Left ventricle myocardium superior (tissue), 1 donor: ENCODE measurements at regions of chr15 and their contacts with region 1.

Region 1: GRCh38 chr15:75201609-75202250 is at the start of gene C15orf39:
- DNase-seq: peak; percentile 90
- ATAC-seq: peak; percentile 81
- total RNA-seq, gene C15orf39: 14.8 TPM

Region 2: DNA sequence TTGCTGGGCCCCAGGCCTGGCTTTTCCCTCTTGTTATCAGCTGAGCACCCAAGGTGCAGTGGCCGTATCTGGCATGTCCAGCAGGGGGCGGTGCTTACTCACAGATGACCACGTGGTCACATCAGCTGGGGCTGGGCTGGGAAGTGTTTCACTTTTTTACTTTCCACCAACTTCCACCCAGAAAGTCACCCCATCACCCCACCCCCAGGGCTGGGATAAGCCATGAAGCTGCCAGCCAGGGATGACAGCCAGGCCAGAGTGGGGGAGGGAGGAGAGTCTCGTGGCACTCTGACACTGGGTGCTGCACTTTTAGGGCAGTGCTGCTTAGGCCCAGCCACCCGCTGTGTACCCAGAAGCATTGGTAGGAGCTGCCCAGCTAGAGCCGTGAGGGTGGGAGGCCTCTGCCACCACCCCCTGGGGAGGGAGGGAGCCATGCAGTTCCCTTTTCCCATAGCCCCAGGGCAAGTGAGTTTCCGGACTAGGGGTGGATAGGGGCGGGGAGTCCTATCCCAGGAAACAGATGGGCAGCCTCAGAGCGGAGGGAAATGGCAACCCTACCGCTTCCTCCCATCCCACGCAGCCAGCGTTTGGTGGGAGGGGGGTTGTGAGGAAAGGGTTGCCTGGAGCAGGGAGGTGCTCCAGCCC is 172.2 kb before region 1 on chr15:
- intact Hi-C with region 1: loop called (anchors 5 kb)
- DNase-seq: peak; percentile 96
- ATAC-seq: peak; percentile 89

Region 3: GRCh38 chr15:75042730-75043508 is 158.8 kb before region 1 on chr15:
- intact Hi-C with region 1: loop called (anchors 5 kb)
- DNase-seq: peak; percentile 89
- ATAC-seq: peak; percentile 69